Activated T-helper 2 cell treated with anti-CD3 and anti-CD28 coated beads, Interferon-gamma antibody, Interleukin-2, Interleukin-4, amounts not matched to agents 10 μg/mL and 5 μg/mL and 100 μg/mL, durations not matched to agents 14 hours and 24 hours and 36 hours (primary cell): ENCODE measurements at regions of chr19 and their contacts with region 1.

Region 1: GRCh38 chr19:11570039-11570462 is 7.4 kb downstream of the ACP5 start:
- DNase-seq: no peak
- H3K4me3 Mint-ChIP-seq: no peak overlapping the region
- H3K27ac Mint-ChIP-seq: no peak overlapping the region
- H3K4me1 Mint-ChIP-seq: peaks cover 12% of the 10 kb centered on the region
- H3K27me3 Mint-ChIP-seq: no peaks in the 10 kb centered on the region

Region 2: GRCh38 chr19:11519138-11519537 is 50.9 kb before region 1 on chr19:
- intact Hi-C with region 1: no loop called
- DNase-seq: no peak
- H3K4me3 Mint-ChIP-seq: no peak overlapping the region
- H3K27ac Mint-ChIP-seq: no peak overlapping the region
- H3K4me1 Mint-ChIP-seq: no peaks in the 10 kb centered on the region
- H3K27me3 Mint-ChIP-seq: no peaks in the 10 kb centered on the region

Region 3: DNA sequence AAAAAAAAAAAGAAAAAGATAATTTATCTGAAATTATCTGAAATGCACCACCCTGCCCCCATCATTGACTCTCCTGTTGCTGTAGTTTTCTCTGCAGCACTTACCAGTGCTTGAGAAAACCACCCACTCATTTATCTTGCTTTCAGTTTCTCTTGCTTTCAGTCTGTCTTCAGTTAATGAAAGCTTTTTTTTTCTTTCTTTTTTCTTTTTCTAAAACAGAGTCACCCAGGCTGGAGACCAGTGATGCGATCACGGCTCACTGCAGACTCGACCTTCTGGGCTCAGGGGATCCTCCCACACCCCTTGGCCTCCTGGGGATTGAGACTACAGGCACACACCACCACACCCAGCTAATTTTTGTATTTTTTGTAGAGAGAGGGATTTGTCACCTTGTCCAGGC is 11.7 kb after region 1 on chr19:
- intact Hi-C with region 1: loop called (anchors 1 kb)
- DNase-seq: peak; percentile 56
- H3K4me3 Mint-ChIP-seq: peak overlapping the region; percentile 74
- H3K27ac Mint-ChIP-seq: peak overlapping the region; percentile 96
- H3K4me1 Mint-ChIP-seq: peaks cover 20% of the 10 kb centered on the region
- H3K27me3 Mint-ChIP-seq: no peaks in the 10 kb centered on the region